ENCODE measurements at regions of chr4 and their contacts with region 1.

Region 1: GRCh38 chr4:52051619-52052474 is 743 bp downstream of the SPATA18 start:
- H3K4me3 ChIP-seq: peak overlapping the region; percentile 54
- H3K27ac ChIP-seq: peak overlapping the region; percentile 66; the same call in 1 of the 2 replicates
- H3K4me1 ChIP-seq: no peaks in the 10 kb centered on the region
- CTCF ChIP-seq: no peak

Region 2: GRCh38 chr4:52038103-52038912 is 13.5 kb before region 1 on chr4 and contains the start of gene SGCB:
- CTCF ChIA-PET with region 1: no interaction called
- POLR2A ChIA-PET with region 1: interaction called, 10 read pairs
- H3K4me3 ChIP-seq: peak within 1 kb of the TSS; percentile 78
- H3K27ac ChIP-seq: peak within 1 kb of the TSS; percentile 42; the same call in 1 of the 2 replicates
- H3K4me1 ChIP-seq: no peaks in the 10 kb centered on the region
- CTCF ChIP-seq: no peak

Region 3: GRCh38 chr4:52069571-52069970 is 17.7 kb after region 1 on chr4:
- CTCF ChIA-PET with region 1: no interaction called
- POLR2A ChIA-PET with region 1: no interaction called
- H3K4me3 ChIP-seq: no peak overlapping the region
- H3K27ac ChIP-seq: no peak overlapping the region
- H3K4me1 ChIP-seq: no peaks in the 10 kb centered on the region
- CTCF ChIP-seq: no peak

Region 4: DNA sequence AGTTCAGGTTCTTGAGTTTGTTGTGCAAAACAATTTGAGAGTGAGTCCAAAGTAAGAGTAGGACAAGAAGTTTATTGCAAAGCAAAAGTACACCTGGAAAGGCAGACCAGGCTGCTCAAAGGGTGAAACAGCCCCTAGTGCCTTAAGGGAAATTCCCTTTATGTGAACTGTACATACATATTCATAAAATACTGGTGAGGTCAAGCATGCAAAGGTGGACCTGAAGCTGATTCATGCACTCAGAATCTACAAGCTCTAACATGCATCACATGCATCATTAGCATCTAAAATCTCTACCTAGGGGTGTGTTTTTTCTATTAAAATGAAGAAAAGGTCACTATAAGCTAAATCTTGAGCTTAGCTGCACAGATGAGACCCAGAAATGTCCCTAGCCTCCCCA is 266.1 kb after region 1 on chr4:
- CTCF ChIA-PET with region 1: no interaction called
- POLR2A ChIA-PET with region 1: no interaction called
- H3K4me3 ChIP-seq: no peak overlapping the region
- H3K27ac ChIP-seq: no peak overlapping the region
- H3K4me1 ChIP-seq: no peaks in the 10 kb centered on the region
- CTCF ChIP-seq: no peak